Vagina (tissue), 2 donors: ENCODE measurements at regions of chr15 and their contacts with region 1.

Region 1: DNA sequence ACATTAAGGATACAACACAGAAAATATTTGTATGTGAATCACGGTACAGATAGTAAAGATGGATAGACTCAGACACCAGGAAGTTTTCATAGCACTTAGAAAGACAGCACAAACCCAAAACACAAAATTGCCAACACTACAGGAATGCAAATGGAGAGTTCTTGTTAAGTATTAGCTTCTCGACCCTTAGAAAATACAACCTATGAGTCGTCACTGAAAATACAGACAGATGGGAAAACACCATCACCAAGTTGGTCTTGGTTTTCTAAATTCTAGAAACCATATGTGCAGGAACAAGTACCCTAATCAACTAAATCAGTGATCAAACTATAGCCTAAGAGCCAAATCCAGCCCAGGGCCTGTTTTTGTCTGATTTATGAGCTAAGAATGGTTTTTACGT is 50.7 kb downstream of the PEAK1 start:
- DNase-seq: no peak
- H3K4me3 ChIP-seq: no peak overlapping the region
- H3K27ac ChIP-seq: no peak overlapping the region
- H3K4me1 ChIP-seq: peaks cover 19% of the 10 kb centered on the region
- H3K27me3 ChIP-seq: no peaks in the 10 kb centered on the region
- CTCF ChIP-seq: no peak
- POLR2A ChIP-seq: no peak

Region 2: GRCh38 chr15:77773906-77774305 is 404.7 kb after region 1 on chr15:
- intact Hi-C with region 1: no loop called
- DNase-seq: no peak
- H3K4me3 ChIP-seq: no peak overlapping the region
- H3K27ac ChIP-seq: no peak overlapping the region
- H3K4me1 ChIP-seq: no peaks in the 10 kb centered on the region
- H3K27me3 ChIP-seq: no peaks in the 10 kb centered on the region
- CTCF ChIP-seq: no peak
- POLR2A ChIP-seq: no peak

Region 3: DNA sequence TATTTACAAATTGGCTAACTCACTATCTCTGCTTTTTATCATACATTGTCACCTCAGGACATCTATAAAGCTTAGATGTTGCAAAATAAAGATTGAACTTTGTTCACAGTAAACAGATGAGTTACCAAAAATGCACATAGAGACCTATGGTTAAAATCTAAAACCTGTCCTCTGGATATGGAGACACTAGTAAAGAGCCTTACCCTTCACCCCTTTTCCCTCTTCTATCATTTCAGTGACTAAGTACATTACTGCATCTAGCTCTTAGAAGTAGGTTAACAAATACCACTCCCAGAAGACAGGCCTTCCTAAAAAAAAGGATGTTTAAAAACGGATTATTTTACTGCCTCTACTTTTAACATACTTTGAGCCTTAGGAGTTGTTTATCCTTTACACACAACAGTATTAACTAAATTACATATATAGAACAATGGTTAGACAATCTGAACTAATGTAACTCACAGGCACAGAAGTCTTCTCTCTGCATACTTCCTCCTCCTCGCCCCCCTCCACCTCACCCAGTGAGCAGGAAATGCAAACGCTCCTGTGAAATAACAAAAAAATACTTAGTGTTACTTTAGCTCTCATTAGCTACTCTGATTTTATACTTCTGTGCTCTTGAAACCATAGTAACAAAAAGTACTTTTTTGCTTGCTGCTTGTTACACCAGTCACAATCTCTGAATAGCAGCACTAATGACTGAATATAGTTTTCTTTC is 1092.2 kb after region 1 on chr15:
- intact Hi-C with region 1: loop called (anchors 10 kb)
- DNase-seq: no peak
- H3K4me3 ChIP-seq: no peak overlapping the region
- H3K27ac ChIP-seq: peak overlapping the region; percentile 8
- H3K4me1 ChIP-seq: peaks cover 53% of the 10 kb centered on the region
- H3K27me3 ChIP-seq: no peaks in the 10 kb centered on the region
- CTCF ChIP-seq: no peak
- POLR2A ChIP-seq: no peak

Region 4: DNA sequence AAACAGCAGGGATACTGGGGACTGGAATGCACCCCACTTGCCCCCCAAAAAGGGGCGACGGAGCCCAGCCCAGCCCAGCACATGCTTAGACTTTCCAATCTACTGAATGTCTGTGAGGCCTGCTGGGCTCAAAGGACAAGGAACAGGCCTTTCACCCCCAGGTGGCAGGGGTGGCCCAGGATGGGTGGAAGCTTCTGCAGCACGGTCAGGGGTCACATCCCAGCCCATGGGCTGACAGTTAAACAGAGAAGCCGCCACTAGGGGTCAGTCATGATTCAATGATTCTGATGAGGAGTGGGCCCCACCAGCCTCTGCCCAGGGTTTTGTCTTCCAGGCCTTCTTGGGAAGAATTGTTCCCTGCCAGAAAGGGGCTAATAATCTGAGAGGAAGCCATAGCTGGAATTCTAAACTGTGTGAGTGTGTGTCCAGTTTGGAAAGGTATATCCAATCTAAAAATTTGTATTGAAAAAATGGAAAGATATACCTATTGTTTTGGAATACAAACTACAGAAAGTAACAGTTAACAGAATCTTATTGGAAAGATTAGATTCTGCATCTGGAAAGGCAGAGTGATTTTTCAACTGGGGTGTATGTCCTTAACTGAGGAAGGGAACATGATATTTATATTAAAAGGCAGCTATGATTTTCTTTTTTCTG is 1269.6 kb after region 1 on chr15:
- intact Hi-C with region 1: no loop called
- DNase-seq: no peak
- H3K4me3 ChIP-seq: no peak overlapping the region
- H3K27ac ChIP-seq: no peak overlapping the region
- H3K4me1 ChIP-seq: peaks cover 12% of the 10 kb centered on the region
- H3K27me3 ChIP-seq: no peaks in the 10 kb centered on the region
- CTCF ChIP-seq: peak; percentile 10 to 50 (median 35)
- POLR2A ChIP-seq: no peak